Activated CD4-positive, alpha-beta memory T cell treated with anti-CD3 and anti-CD28 coated beads for 36 hours (primary cell): ENCODE measurements at regions of chr5 and their contacts with region 1.

Region 1: DNA sequence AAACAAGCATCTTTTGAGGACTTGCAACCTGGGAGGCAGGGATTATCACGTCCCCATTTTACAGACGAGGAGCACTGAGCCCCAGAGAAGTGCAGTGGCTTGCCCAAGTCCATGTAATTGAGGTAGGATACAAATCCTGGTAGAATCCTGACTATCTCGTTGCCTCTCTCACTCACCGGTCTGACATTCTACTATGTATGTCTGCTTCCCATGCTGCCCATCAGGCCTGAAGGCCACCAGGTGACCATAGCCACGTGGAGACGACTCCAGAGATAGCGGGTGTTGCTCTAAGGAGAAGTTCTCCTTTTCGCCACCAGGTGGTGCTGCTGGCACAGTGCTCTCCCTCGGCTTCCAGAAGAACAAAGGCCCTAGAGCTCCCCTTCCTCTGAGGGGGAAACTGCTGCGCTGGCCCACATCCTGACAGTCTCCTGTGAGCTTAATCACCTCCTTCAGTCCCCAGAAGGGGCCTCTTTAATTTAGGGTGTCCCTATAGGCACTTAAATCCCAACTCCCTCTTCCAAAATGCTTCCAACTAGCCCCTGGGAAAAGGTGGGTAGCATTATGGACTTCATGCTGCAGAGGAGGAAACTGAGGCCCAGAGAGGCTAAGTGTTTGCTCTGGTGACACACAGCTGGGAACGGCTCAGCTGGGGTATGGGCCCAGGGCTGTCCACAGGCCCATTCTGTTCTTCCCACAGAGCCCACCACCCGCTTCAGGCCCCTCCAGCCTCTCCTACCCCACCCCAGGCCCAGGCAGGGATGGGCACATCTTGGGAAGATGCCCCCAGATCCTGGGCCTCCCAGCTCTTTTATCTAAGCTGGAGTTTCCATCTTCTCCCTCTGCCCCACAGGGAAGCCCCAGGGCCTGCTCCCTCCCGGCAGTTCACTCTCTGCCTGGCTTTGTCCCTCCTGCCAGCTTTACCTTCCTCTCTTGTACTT is 6.4 kb downstream of the SLC34A1 start:
- DNase-seq: peak; percentile 94
- H3K4me3 Mint-ChIP-seq: peak overlapping the region; percentile 17
- H3K27ac Mint-ChIP-seq: peak overlapping the region; percentile 87
- H3K4me1 Mint-ChIP-seq: peaks cover 41% of the 10 kb centered on the region
- H3K27me3 Mint-ChIP-seq: no peaks in the 10 kb centered on the region

Region 2: GRCh38 chr5:177317959-177318377 is 72.7 kb before region 1 on chr5:
- CTCF ChIA-PET with region 1: interaction called, 52 read pairs
- POLR2A ChIA-PET with region 1: no interaction called
- intact Hi-C with region 1: loop called (anchors 1 kb)
- DNase-seq: peak; percentile 86
- H3K4me3 Mint-ChIP-seq: no peak overlapping the region
- H3K27ac Mint-ChIP-seq: no peak overlapping the region
- H3K4me1 Mint-ChIP-seq: peaks cover 15% of the 10 kb centered on the region
- H3K27me3 Mint-ChIP-seq: no peaks in the 10 kb centered on the region

Region 3: GRCh38 chr5:177370488-177371119 is 20.0 kb before region 1 on chr5:
- CTCF ChIA-PET with region 1: interaction called, 115 read pairs
- POLR2A ChIA-PET with region 1: interaction called, 9 read pairs
- intact Hi-C with region 1: loop called (anchors 1 kb)
- DNase-seq: peak; percentile 79
- H3K4me3 Mint-ChIP-seq: peak overlapping the region; percentile 74
- H3K27ac Mint-ChIP-seq: peak overlapping the region; percentile 38
- H3K4me1 Mint-ChIP-seq: peaks cover 65% of the 10 kb centered on the region
- H3K27me3 Mint-ChIP-seq: no peaks in the 10 kb centered on the region

Region 4: GRCh38 chr5:177431317-177432142 is 40.9 kb after region 1 on chr5:
- CTCF ChIA-PET with region 1: interaction called, 42 read pairs
- POLR2A ChIA-PET with region 1: interaction called, 13 read pairs
- intact Hi-C with region 1: loop called (anchors 1 kb)
- DNase-seq: peak; percentile 84
- H3K4me3 Mint-ChIP-seq: peak overlapping the region; percentile 97
- H3K27ac Mint-ChIP-seq: peak overlapping the region; percentile 97
- H3K4me1 Mint-ChIP-seq: peaks cover 61% of the 10 kb centered on the region
- H3K27me3 Mint-ChIP-seq: no peaks in the 10 kb centered on the region

Region 5: GRCh38 chr5:177454397-177455035 is 63.9 kb after region 1 on chr5:
- CTCF ChIA-PET with region 1: interaction called, 178 read pairs
- POLR2A ChIA-PET with region 1: interaction called, 16 read pairs
- intact Hi-C with region 1: loop called (anchors 1 kb)
- DNase-seq: peak; percentile 95
- H3K4me3 Mint-ChIP-seq: peak overlapping the region; percentile 78
- H3K27ac Mint-ChIP-seq: peak overlapping the region; percentile 66
- H3K4me1 Mint-ChIP-seq: peaks cover 11% of the 10 kb centered on the region
- H3K27me3 Mint-ChIP-seq: no peaks in the 10 kb centered on the region